CD4-positive, alpha-beta memory T cell (primary cell): ENCODE measurements at regions of chr15 and their contacts with region 1.

Region 1: DNA sequence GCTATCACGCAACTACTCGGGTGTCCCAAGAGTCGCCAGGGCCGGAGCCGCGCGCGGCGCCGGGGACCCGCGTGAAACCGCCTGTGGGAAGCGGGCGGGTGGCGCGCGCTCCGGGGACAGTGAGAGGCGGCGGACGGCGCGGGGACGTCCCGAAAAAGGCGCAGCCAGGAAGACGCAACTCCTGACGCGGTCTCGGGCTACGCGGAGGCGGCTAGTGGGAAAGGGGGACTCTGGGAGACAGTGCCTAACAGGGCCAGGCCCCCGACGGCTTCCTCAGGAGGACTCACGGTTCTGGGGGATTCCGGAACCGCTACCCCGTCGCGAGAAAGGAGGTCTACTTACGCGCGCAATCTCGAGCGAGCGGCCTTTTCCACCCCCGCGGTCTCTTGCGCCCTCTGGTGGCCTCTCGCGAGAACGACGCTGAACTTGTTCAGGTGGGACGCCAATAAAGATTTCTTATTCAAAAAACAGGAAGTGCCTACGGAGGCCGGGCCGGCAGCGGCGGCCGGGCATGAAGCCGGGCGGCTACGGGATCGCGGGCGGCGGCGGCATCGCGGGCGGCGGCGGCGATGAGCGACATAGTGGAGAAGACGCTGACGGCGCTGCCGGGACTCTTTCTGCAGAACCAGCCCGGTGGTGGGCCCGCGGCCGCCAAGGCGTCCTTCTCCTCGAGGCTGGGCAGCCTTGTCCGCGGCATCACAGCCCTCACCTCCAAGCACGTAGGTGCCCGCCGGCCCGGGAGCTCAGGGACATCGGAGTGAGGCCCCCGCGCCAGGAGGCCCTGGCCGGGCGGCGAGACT is at the start of gene AP4E1:
- DNase-seq: peak; percentile 93 to 96 (median 94)
- H3K4me3 ChIP-seq: peak within 1 kb of the TSS; percentile 57 to 89
- H3K4me3 Mint-ChIP-seq: peak within 1 kb of the TSS; percentile 90 to 98 (median 92)
- H3K27ac ChIP-seq: peak within 1 kb of the TSS; percentile 100
- H3K27ac Mint-ChIP-seq: peak within 1 kb of the TSS; percentile 96 to 99 (median 98)
- H3K4me1 ChIP-seq: peaks cover 16% of the 10 kb centered on the region
- H3K4me1 Mint-ChIP-seq: peaks cover 15 to 44% (median 19%) of the 10 kb centered on the region in 4 donors
- H3K27me3 ChIP-seq: no peaks in the 10 kb centered on the region
- H3K27me3 Mint-ChIP-seq: no peaks in the 10 kb centered on the region
- total RNA-seq, gene AP4E1: 13.4 to 15.2 TPM

Region 2: DNA sequence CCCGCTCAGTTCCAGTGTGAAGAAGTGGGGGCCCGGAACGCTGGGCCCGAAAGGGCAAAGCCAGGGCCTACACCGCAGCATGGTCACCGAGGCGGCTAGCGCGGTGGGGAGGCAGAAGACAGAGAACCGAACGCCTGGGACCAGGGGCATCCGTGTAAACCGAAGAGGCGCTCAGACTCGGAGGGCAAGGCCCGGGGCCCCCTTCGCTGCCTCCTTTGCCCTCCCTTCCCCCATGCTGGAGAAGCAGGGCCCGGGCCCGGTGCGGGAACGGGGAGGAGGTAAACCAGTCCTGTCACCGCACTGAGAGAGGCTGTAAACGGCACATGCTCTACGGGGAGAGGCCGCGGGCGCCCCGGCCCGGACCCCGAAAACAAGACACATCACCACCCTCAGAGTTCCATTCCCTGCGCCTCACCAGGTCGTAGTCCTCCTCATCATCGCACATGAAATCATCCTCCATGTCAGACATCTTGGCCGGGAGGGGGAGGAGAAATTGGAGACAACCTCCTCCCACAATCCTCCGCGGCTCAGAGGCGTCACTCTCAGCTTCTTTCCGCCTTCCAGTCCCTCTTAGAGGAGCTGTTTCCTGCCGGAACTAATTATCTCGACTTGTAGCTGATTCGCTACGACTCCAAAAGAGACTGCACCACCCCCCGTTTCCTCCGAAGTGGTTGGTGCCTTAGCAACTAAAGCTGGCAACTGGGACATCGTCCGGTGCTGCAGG is 1753.1 kb before region 1 on chr15 and contains the start of gene COPS2:
- CTCF ChIA-PET with region 1: no interaction called
- POLR2A ChIA-PET with region 1: interaction called, 6 read pairs
- intact Hi-C with region 1: loop called (anchors 5 kb)
- DNase-seq: peak; percentile 93 to 97 (median 95)
- H3K4me3 ChIP-seq: peak within 1 kb of the TSS; percentile 74 to 88
- H3K4me3 Mint-ChIP-seq: peak within 1 kb of the TSS; percentile 97 to 100 (median 100)
- H3K27ac ChIP-seq: peak within 1 kb of the TSS; percentile 94
- H3K27ac Mint-ChIP-seq: peak within 1 kb of the TSS; percentile 97 to 100 (median 99)
- H3K4me1 ChIP-seq: peaks cover 52% of the 10 kb centered on the region
- H3K4me1 Mint-ChIP-seq: peaks cover 33 to 61% (median 49%) of the 10 kb centered on the region in 4 donors
- H3K27me3 ChIP-seq: no peaks in the 10 kb centered on the region
- H3K27me3 Mint-ChIP-seq: no peaks in the 10 kb centered on the region
- total RNA-seq, gene COPS2: 55.5 to 56.9 TPM

Region 3: DNA sequence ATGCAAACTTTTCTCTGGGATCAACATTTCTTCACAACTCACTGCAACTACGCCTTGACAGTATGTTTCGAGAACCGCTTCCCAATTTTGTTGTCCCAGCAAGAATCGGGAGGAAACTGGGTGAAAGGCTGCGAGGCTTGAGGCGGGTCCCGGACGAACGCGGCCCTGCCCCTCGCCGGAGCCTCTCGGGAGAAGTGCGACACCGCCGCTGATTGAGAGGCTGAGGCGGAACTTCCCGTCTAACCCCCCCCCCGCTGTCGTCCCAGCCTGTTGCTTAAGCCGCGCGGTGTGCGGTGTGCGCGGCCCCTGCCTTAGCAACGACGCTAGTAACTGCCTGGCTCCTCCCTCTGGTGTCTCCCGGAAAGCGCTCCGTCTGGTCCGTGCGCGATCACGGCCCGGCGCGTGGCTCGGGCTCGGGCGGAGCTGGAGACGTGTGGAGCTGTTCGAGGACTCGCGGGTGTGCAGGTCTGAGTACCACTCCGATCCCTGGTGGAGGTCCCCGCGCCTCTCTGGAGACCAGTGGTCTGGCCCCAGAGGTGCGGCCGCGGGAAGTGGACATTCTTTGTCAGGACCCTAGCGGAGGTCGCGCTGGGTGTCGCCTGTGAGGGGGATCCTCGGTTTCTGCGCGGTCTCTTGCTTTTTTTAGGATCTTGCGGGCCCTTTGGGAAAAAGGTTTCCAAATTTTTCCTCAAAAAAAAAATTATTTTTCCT is 1287.6 kb before region 1 on chr15 and contains the starts of genes DTWD1 and FAM227B:
- CTCF ChIA-PET with region 1: no interaction called
- POLR2A ChIA-PET with region 1: no interaction called
- intact Hi-C with region 1: loop called (anchors 5 kb)
- DNase-seq: peak; percentile 92 to 96 (median 93)
- H3K4me3 ChIP-seq: peak within 1 kb of the TSS; percentile 80 to 92
- H3K4me3 Mint-ChIP-seq: peak within 1 kb of the TSS; percentile 95 to 99 (median 98)
- H3K27ac ChIP-seq: peak within 1 kb of the TSS; percentile 71
- H3K27ac Mint-ChIP-seq: peak within 1 kb of the TSS; percentile 98 to 99 (median 99)
- H3K4me1 ChIP-seq: peaks cover 22% of the 10 kb centered on the region
- H3K4me1 Mint-ChIP-seq: peaks cover 25 to 51% (median 37%) of the 10 kb centered on the region in 4 donors
- H3K27me3 ChIP-seq: no peaks in the 10 kb centered on the region
- H3K27me3 Mint-ChIP-seq: no peaks in the 10 kb centered on the region
- total RNA-seq, gene DTWD1: 28.7 to 29.9 TPM
- total RNA-seq, gene FAM227B: 11.5 to 13.6 TPM

Region 4: GRCh38 chr15:50424066-50424890 is 484.1 kb before region 1 on chr15 and contains the start of gene USP8:
- CTCF ChIA-PET with region 1: no interaction called
- POLR2A ChIA-PET with region 1: interaction called, 3 read pairs
- intact Hi-C with region 1: loop called (anchors 1 kb)
- DNase-seq: peak; percentile 90 to 93 (median 92)
- H3K4me3 ChIP-seq: peak within 1 kb of the TSS; percentile 99
- H3K4me3 Mint-ChIP-seq: peak within 1 kb of the TSS; percentile 96 to 100 (median 98)
- H3K27ac ChIP-seq: peak within 1 kb of the TSS; percentile 94
- H3K27ac Mint-ChIP-seq: peak within 1 kb of the TSS; percentile 98 to 100 (median 99)
- H3K4me1 ChIP-seq: peaks cover 32% of the 10 kb centered on the region
- H3K4me1 Mint-ChIP-seq: peaks cover 13 to 53% (median 32%) of the 10 kb centered on the region in 4 donors
- H3K27me3 ChIP-seq: no peaks in the 10 kb centered on the region
- H3K27me3 Mint-ChIP-seq: no peaks in the 10 kb centered on the region
- total RNA-seq, gene USP8: 68.9 to 70.9 TPM

Region 5: DNA sequence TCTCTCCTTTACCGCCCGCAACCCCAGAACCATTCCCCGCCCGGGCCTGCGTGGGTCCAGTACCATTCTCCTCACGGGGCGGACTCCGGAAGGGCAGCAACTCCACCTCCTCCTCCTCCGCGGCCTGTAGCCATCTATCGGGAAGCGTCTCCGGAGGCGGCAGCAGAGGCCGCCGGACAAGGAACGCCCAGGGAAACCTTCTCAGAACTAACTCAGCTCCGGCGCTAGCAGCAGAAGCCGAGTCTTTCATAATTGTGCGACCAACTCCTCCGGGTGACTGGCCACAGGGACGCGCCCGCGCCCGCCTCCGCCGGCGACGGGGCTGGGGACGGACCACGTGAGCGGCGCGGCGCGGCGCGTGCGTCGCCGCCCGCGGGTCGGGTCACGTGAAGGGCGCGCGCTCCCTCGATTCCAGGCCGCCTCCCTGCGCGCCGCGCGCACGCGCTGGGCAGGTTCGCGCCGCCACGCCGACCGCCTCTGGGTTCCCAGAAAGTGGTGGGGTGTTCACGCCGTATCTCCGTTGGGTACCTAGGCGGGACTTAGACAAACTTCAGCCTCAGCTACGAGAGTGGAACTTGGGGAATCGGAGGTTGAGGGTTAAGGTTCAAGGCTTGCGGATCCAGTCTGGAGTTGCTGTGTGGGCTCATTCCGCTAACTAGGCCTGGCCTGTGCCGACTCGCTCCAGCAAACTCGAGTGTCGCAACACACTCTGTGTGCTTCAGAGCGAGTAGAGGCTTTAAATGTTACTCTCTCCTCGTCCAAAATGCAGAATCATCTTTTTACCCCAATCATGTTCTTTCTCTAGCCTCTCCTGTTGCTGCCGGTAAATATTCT is 221.7 kb before region 1 on chr15 and contains the start of gene TRPM7:
- CTCF ChIA-PET with region 1: interaction called, 6 read pairs
- POLR2A ChIA-PET with region 1: interaction called, 14 read pairs
- intact Hi-C with region 1: loop called (anchors 1 kb)
- DNase-seq: peak; percentile 86 to 90 (median 90)
- H3K4me3 ChIP-seq: peak within 1 kb of the TSS; percentile 89 to 99
- H3K4me3 Mint-ChIP-seq: peak within 1 kb of the TSS; percentile 98 to 100 (median 99)
- H3K27ac ChIP-seq: peak within 1 kb of the TSS; percentile 99
- H3K27ac Mint-ChIP-seq: peak within 1 kb of the TSS; percentile 98 to 100 (median 99)
- H3K4me1 ChIP-seq: peaks cover 52% of the 10 kb centered on the region
- H3K4me1 Mint-ChIP-seq: peaks cover 32 to 61% (median 45%) of the 10 kb centered on the region in 4 donors
- H3K27me3 ChIP-seq: no peaks in the 10 kb centered on the region
- H3K27me3 Mint-ChIP-seq: no peaks in the 10 kb centered on the region
- total RNA-seq, gene TRPM7: 65.3 to 66.7 TPM

Region 6: DNA sequence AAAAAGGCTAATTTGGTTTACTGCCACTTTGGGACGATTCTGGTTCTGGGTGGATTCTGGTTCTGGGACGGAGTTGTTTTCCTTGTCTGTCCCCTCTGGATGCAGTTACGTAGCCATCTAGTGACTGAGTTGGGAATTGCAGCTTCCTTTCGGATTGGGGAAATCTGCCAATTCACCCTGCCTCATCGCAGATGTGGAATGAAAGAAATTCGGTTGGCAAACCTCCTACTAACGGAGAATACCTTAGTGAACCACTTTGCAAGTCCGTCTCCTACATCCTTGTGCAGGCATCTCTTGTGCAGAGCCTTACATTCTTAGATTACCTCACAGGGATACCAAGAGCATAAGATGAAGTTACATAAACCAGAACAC is 31.4 kb before region 1 on chr15:
- CTCF ChIA-PET with region 1: interaction called, 12 read pairs
- POLR2A ChIA-PET with region 1: interaction called, 5 read pairs
- intact Hi-C with region 1: loop called (anchors 1 kb)
- DNase-seq: peak; percentile 56 to 76 (median 69)
- H3K4me3 ChIP-seq: peak overlapping the region in 1 of 2 donors; percentile 29
- H3K4me3 Mint-ChIP-seq: peak overlapping the region; percentile 49 to 87 (median 74)
- H3K27ac ChIP-seq: no peak overlapping the region
- H3K27ac Mint-ChIP-seq: peak overlapping the region in 5 of 7 donors; percentile 38 to 64 (median 58)
- H3K4me1 ChIP-seq: peaks cover 20% of the 10 kb centered on the region
- H3K4me1 Mint-ChIP-seq: peaks cover 12 to 41% (median 20%) of the 10 kb centered on the region in 4 donors
- H3K27me3 ChIP-seq: no peaks in the 10 kb centered on the region
- H3K27me3 Mint-ChIP-seq: peaks cover 0 to 6% of the 10 kb centered on the region in 2 donors

Region 7: DNA sequence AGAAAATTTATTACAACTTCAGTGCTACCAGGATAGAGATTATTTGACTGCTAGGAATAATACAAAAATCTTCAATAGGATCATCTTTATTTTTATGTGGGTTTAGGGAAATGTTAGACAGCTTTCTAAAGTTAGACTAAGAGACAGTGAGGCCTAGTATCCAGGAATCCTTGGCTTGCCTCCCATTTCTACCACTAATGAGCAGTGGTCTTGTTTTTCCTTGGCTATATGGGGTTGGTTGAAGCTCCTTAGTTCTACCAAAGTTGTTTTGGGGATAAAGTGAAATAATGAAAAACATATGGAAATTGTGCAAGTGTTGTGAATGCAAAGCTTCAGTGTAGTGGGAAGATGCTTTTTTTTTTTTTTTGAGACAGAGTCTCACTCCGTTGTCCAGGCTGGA is 16.9 kb after region 1 on chr15:
- CTCF ChIA-PET with region 1: no interaction called
- POLR2A ChIA-PET with region 1: no interaction called
- intact Hi-C with region 1: no loop called
- DNase-seq: no peak
- H3K4me3 ChIP-seq: no peak overlapping the region
- H3K4me3 Mint-ChIP-seq: no peak overlapping the region
- H3K27ac ChIP-seq: no peak overlapping the region
- H3K27ac Mint-ChIP-seq: no peak overlapping the region
- H3K4me1 ChIP-seq: no peaks in the 10 kb centered on the region
- H3K4me1 Mint-ChIP-seq: peaks cover 6 to 9% (median 7%) of the 10 kb centered on the region in 4 donors
- H3K27me3 ChIP-seq: no peaks in the 10 kb centered on the region
- H3K27me3 Mint-ChIP-seq: no peaks in the 10 kb centered on the region